ENCODE measurements at regions of chr6 and their contacts with region 1.

Region 1: GRCh38 chr6:149513915-149514314 is 29.1 kb upstream of the ZC3H12D start:
- DNase-seq: no peak
- ATAC-seq: no peak
- H3K4me3 ChIP-seq: no peak overlapping the region
- H3K4me3 Mint-ChIP-seq: no peak overlapping the region
- H3K27ac ChIP-seq: no peak overlapping the region
- H3K27ac Mint-ChIP-seq: peak overlapping the region; percentile 48 to 75
- H3K4me1 ChIP-seq: peaks cover 0 to 2% of the 10 kb centered on the region in 2 experiments
- H3K4me1 Mint-ChIP-seq: peaks cover 36 to 49% (median 45%) of the 10 kb centered on the region in 3 donors
- H3K27me3 ChIP-seq: no peaks in the 10 kb centered on the region
- H3K27me3 Mint-ChIP-seq: no peaks in the 10 kb centered on the region

Region 2: DNA sequence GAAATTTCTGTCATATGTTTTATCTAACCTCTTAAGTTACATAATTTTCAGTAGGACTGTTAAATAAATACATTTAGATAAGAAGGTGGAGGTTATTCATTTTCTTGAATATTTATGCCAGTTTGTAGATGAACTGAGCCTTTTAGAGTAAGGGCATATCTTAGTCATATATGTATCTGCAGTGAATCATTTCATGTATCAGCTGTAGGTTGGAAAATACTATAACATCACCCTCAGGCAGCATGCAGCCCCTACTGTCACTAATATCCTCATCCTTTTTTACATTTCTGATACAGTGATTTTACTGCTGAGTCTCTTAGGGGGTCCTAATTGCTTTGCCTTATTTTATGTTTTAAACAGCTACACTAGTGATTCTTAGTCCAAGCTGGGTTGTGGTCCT is 133.4 kb before region 1 on chr6:
- CTCF ChIA-PET with region 1: interaction called in 1 of 2 experiments, 4 read pairs
- POLR2A ChIA-PET with region 1: interaction called in 1 of 2 experiments, 10 read pairs
- DNase-seq: no peak
- ATAC-seq: no peak
- H3K4me3 ChIP-seq: no peak overlapping the region
- H3K4me3 Mint-ChIP-seq: no peak overlapping the region
- H3K27ac ChIP-seq: no peak overlapping the region
- H3K27ac Mint-ChIP-seq: peak overlapping the region in 1 of 2 donors; percentile 22
- H3K4me1 ChIP-seq: peaks cover 0 to 2% of the 10 kb centered on the region in 2 experiments
- H3K4me1 Mint-ChIP-seq: peaks cover 55 to 62% (median 55%) of the 10 kb centered on the region in 3 donors
- H3K27me3 ChIP-seq: no peaks in the 10 kb centered on the region
- H3K27me3 Mint-ChIP-seq: no peaks in the 10 kb centered on the region

Region 3: GRCh38 chr6:149453597-149454380 is 60.1 kb before region 1 on chr6:
- CTCF ChIA-PET with region 1: interaction called, 6 to 10 read pairs
- POLR2A ChIA-PET with region 1: interaction called in 1 of 2 experiments, 3 read pairs
- DNase-seq: no peak
- ATAC-seq: no peak
- H3K4me3 ChIP-seq: no peak overlapping the region
- H3K4me3 Mint-ChIP-seq: no peak overlapping the region
- H3K27ac ChIP-seq: no peak overlapping the region
- H3K27ac Mint-ChIP-seq: no peak overlapping the region
- H3K4me1 ChIP-seq: peaks cover 0 to 2% of the 10 kb centered on the region in 2 experiments
- H3K4me1 Mint-ChIP-seq: peaks cover 0 to 5% (median 3%) of the 10 kb centered on the region in 3 donors
- H3K27me3 ChIP-seq: peaks cover 0 to 4% of the 10 kb centered on the region in 2 experiments
- H3K27me3 Mint-ChIP-seq: no peaks in the 10 kb centered on the region

Region 4: GRCh38 chr6:149484733-149485700 is 28.9 kb before region 1 on chr6 and contains the start of gene ZC3H12D:
- CTCF ChIA-PET with region 1: interaction called, 11 read pairs
- POLR2A ChIA-PET with region 1: interaction called, 6 to 42 read pairs
- DNase-seq: peak; percentile 60 to 92 (median 79)
- ATAC-seq: peak; percentile 77 to 83 (median 79)
- H3K4me3 ChIP-seq: peak within 1 kb of the TSS; percentile 25 to 65
- H3K4me3 Mint-ChIP-seq: peak within 1 kb of the TSS; percentile 85 to 92 (median 91)
- H3K27ac ChIP-seq: peak within 1 kb of the TSS; percentile 98
- H3K27ac Mint-ChIP-seq: peak within 1 kb of the TSS; percentile 99
- H3K4me1 ChIP-seq: peaks cover 15 to 53% of the 10 kb centered on the region in 2 experiments
- H3K4me1 Mint-ChIP-seq: peaks cover 55 to 60% (median 58%) of the 10 kb centered on the region in 3 donors
- H3K27me3 ChIP-seq: no peaks in the 10 kb centered on the region
- H3K27me3 Mint-ChIP-seq: no peaks in the 10 kb centered on the region
- total RNA-seq, gene ZC3H12D: 48.2 to 117 (median 107) TPM

Region 5: GRCh38 chr6:149534742-149535141 is 20.8 kb after region 1 on chr6:
- CTCF ChIA-PET with region 1: interaction called, 3 to 10 read pairs
- POLR2A ChIA-PET with region 1: interaction called in 1 of 2 experiments, 3 read pairs
- DNase-seq: no peak
- ATAC-seq: no peak
- H3K4me3 ChIP-seq: no peak overlapping the region
- H3K4me3 Mint-ChIP-seq: no peak overlapping the region
- H3K27ac ChIP-seq: no peak overlapping the region
- H3K27ac Mint-ChIP-seq: no peak overlapping the region
- H3K4me1 ChIP-seq: no peaks in the 10 kb centered on the region
- H3K4me1 Mint-ChIP-seq: peaks cover 5 to 14% (median 6%) of the 10 kb centered on the region in 3 donors
- H3K27me3 ChIP-seq: no peaks in the 10 kb centered on the region
- H3K27me3 Mint-ChIP-seq: no peaks in the 10 kb centered on the region

Region 6: GRCh38 chr6:150046943-150047342 is 533.0 kb after region 1 on chr6:
- CTCF ChIA-PET with region 1: no interaction called
- POLR2A ChIA-PET with region 1: no interaction called
- DNase-seq: no peak
- ATAC-seq: no peak
- H3K4me3 ChIP-seq: no peak overlapping the region
- H3K4me3 Mint-ChIP-seq: no peak overlapping the region
- H3K27ac ChIP-seq: no peak overlapping the region
- H3K27ac Mint-ChIP-seq: no peak overlapping the region
- H3K4me1 ChIP-seq: peaks cover 0 to 4% of the 10 kb centered on the region in 2 experiments
- H3K4me1 Mint-ChIP-seq: peaks cover 3 to 7% (median 4%) of the 10 kb centered on the region in 3 donors
- H3K27me3 ChIP-seq: peaks cover 0 to 48% of the 10 kb centered on the region in 2 experiments
- H3K27me3 Mint-ChIP-seq: peaks cover 21 to 66% of the 10 kb centered on the region in 2 donors

Measured in T-cell (primary cell).